ENCODE measurements at regions of chr11 and their contacts with region 1.

Region 1: GRCh38 chr11:16613512-16614381 is 124.7 kb upstream of the C11orf58 start:
- DNase-seq: peak; percentile 81
- H3K4me3 Mint-ChIP-seq: peak overlapping the region; percentile 59
- H3K27ac Mint-ChIP-seq: no peak overlapping the region
- H3K4me1 Mint-ChIP-seq: peaks cover 22% of the 10 kb centered on the region
- H3K27me3 Mint-ChIP-seq: peaks cover 45% of the 10 kb centered on the region

Region 2: GRCh38 chr11:15327786-15328231 is 1285.9 kb before region 1 on chr11:
- CTCF ChIA-PET with region 1: no interaction called
- intact Hi-C with region 1: loop called (anchors 5 kb)
- DNase-seq: peak; percentile 21
- H3K4me3 Mint-ChIP-seq: no peak overlapping the region
- H3K27ac Mint-ChIP-seq: no peak overlapping the region
- H3K4me1 Mint-ChIP-seq: no peaks in the 10 kb centered on the region
- H3K27me3 Mint-ChIP-seq: peaks cover 3% of the 10 kb centered on the region

Region 3: GRCh38 chr11:15650105-15650938 is 963.4 kb before region 1 on chr11:
- CTCF ChIA-PET with region 1: interaction called, 3 read pairs
- intact Hi-C with region 1: loop called (anchors 1 kb)
- DNase-seq: peak; percentile 78
- H3K4me3 Mint-ChIP-seq: no peak overlapping the region
- H3K27ac Mint-ChIP-seq: no peak overlapping the region
- H3K4me1 Mint-ChIP-seq: peaks cover 4% of the 10 kb centered on the region
- H3K27me3 Mint-ChIP-seq: peaks cover 22% of the 10 kb centered on the region

Region 4: GRCh38 chr11:15770798-15771414 is 842.8 kb before region 1 on chr11:
- CTCF ChIA-PET with region 1: interaction called, 3 read pairs
- intact Hi-C with region 1: loop called (anchors 2 kb)
- DNase-seq: peak; percentile 39
- H3K4me3 Mint-ChIP-seq: no peak overlapping the region
- H3K27ac Mint-ChIP-seq: no peak overlapping the region
- H3K4me1 Mint-ChIP-seq: no peaks in the 10 kb centered on the region
- H3K27me3 Mint-ChIP-seq: no peaks in the 10 kb centered on the region

Region 5: DNA sequence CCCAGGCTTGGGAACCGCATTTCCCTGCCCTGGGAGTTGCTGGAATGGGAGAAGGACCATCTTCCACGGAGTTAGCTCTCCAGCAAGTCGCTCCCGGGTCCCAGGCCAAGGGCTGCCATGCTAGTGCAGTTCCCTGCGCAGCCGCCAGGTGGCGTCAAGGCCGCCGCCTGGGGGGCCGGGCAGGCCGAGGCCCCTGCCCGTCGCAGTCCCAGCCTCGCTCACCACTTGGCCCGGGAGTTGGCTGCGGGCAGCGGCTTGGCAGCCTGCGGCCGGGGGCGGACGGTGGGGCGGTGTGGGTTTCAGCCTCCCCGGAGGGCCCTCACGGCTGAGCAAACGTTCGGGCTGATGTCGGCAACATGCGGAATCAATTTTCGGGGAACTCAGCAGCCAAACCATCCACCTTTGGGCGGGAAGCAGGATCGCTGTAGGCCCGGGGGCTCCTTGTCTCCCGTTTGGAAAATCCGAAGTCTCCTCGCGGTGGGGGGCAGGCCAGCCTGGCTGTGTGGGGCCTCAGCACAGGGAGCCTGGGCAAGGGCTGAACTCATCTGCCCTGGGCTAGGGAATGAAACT is 672.5 kb before region 1 on chr11:
- CTCF ChIA-PET with region 1: interaction called, 5 read pairs
- intact Hi-C with region 1: loop called (anchors 1 kb)
- DNase-seq: peak; percentile 9
- H3K4me3 Mint-ChIP-seq: no peak overlapping the region
- H3K27ac Mint-ChIP-seq: no peak overlapping the region
- H3K4me1 Mint-ChIP-seq: no peaks in the 10 kb centered on the region
- H3K27me3 Mint-ChIP-seq: no peaks in the 10 kb centered on the region

Region 6: DNA sequence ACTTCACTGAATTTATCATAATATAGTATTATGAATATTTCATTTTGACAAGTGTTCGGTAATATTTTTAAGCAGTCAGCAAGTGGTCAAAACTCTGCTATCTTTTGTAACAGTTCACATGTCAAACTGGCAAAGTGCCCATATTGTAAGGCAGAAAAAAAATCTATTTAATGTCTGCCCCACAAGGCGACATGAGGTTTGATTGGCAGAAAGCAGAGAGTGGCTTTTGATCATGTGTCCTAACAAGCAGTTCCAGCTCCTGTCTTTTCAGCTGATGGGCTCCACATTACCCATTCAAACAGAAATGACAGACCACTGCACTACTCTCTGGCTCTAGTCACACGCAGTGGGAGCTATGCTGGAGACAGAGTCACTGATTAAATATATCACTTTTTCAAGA is 316.4 kb before region 1 on chr11:
- CTCF ChIA-PET with region 1: no interaction called
- intact Hi-C with region 1: no loop called
- DNase-seq: no peak
- H3K4me3 Mint-ChIP-seq: no peak overlapping the region
- H3K27ac Mint-ChIP-seq: no peak overlapping the region
- H3K4me1 Mint-ChIP-seq: no peaks in the 10 kb centered on the region
- H3K27me3 Mint-ChIP-seq: no peaks in the 10 kb centered on the region

Region 7: GRCh38 chr11:16505481-16505880 is 108.3 kb before region 1 on chr11:
- CTCF ChIA-PET with region 1: no interaction called
- intact Hi-C with region 1: no loop called
- DNase-seq: no peak
- H3K4me3 Mint-ChIP-seq: no peak overlapping the region
- H3K27ac Mint-ChIP-seq: no peak overlapping the region
- H3K4me1 Mint-ChIP-seq: no peaks in the 10 kb centered on the region
- H3K27me3 Mint-ChIP-seq: no peaks in the 10 kb centered on the region